ENCODE measurements at regions of chr18 and their contacts with region 1.

Region 1: GRCh38 chr18:76686737-76687262 is 135.6 kb upstream of the ZNF236 start:
- DNase-seq: peak; percentile 80
- ATAC-seq: peak; percentile 94

Region 2: GRCh38 chr18:76398896-76399612 is 287.7 kb before region 1 on chr18:
- intact Hi-C with region 1: loop called (anchors 10 kb)
- DNase-seq: peak; percentile 94
- ATAC-seq: peak; percentile 94

Region 3: DNA sequence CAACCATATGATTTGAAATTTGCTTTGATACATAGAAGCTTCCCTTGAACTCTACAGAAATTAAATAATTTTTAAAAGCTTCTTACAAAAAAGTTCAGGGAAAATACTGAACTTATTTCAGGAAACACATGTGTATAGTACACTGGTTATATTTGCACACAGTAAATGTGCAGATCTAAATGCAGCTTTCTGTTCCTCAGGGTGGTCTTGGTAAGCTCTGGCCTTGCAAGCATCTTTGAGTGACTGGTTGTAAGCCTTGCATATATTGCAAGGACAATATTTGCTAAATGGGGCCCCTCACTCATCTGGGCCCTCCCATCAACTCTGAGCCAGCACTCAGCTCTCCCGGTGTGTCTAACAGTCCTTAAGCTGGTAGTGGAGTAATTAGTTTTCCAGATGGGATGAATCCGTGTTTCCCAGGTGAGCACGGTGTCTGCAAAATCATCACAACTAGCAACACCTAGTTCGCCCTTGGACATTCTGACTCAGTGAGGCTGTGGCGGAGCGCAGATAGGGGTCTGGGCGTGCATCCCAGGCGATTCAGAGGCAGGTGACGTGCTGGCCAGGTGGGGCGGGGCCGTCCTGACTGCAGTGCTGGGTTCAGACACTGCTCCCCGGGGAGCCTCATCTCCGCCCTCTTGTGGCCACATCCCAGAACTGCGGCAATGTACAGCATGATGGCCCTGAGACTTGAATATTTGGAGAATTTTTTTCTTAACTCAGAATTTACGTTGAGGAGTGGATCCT is 296.2 kb after region 1 on chr18:
- intact Hi-C with region 1: no loop called
- DNase-seq: peak; percentile 90
- ATAC-seq: peak; percentile 69